Colonic mucosa (tissue), 4 donors: ENCODE measurements at regions of chr5 and their contacts with region 1.

Region 1: GRCh38 chr5:132490486-132491367 is at the start of gene IRF1:
- DNase-seq: peak; percentile 97
- H3K4me3 ChIP-seq: peak within 1 kb of the TSS; percentile 91
- H3K27ac ChIP-seq: peak within 1 kb of the TSS; percentile 99
- H3K4me1 ChIP-seq: peaks cover 12% of the 10 kb centered on the region
- H3K27me3 ChIP-seq: no peaks in the 10 kb centered on the region
- CTCF ChIP-seq: no peak
- total RNA-seq, gene IRF1: 59.7 to 87.8 TPM

Region 2: GRCh38 chr5:132293066-132293991 is 197.4 kb before region 1 on chr5:
- intact Hi-C with region 1: loop called (anchors 10 kb)
- DNase-seq: peak; percentile 84
- H3K4me3 ChIP-seq: peak overlapping the region; percentile 64
- H3K27ac ChIP-seq: peak overlapping the region; percentile 98
- H3K4me1 ChIP-seq: peaks cover 7% of the 10 kb centered on the region
- H3K27me3 ChIP-seq: no peaks in the 10 kb centered on the region
- CTCF ChIP-seq: no peak

Region 3: DNA sequence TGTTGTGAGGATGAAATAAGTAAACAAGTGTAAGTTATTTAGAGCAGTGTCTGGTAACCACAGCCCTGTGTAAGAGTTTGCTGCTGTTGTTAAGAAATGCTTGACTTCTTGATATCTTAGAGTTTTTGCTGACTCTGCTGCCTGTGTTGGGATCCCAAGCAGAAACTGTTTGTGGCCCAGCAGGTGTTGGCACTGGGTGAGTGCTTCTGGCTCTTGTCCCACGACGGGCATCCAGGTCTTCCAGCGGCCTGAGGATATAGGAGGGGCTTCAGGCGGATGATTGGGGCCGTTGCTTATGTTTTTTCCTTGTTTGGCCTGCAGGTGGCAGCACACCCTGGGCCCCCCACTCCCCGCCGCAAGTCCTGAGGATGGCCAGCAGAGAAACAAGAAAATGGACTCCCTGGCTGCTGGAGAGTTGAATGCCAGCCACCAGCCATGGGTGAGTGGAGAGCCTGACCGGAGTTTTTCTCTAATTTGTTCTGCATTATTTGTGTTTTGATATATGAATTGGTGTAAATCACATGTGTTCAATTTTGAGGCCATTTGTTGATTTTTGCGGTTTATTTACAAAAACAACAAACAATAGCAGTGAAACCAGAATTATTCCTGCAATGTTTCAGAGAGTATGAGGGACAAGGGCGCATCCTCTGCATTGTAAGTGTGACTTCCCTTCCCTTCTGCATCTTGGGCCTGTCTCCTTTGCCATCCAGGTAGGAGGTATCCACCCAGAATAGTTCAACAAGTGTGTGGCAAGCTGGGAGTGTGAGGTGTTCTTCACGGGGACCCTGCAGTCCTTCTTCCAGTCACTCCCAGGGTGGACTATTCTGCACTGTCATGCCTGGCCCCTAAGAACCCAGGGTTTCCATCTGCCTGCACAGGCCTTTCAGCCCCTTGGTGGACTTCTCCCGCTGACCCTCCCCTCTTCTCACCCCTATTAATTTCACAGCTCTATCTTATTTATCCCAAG is 70.9 kb before region 1 on chr5:
- intact Hi-C with region 1: loop called (anchors 5 kb)
- DNase-seq: peak; percentile 79
- H3K4me3 ChIP-seq: no peak overlapping the region
- H3K27ac ChIP-seq: peak overlapping the region; percentile 55
- H3K4me1 ChIP-seq: peaks cover 44% of the 10 kb centered on the region
- H3K27me3 ChIP-seq: no peaks in the 10 kb centered on the region
- CTCF ChIP-seq: peak; percentile 72